ENCODE measurements at regions of chr9 and their contacts with region 1.

Region 1: GRCh38 chr9:12631866-12632265 is 61.3 kb upstream of the TYRP1 start:
- DNase-seq: no peak
- H3K4me3 ChIP-seq: no peak overlapping the region
- H3K27ac ChIP-seq: no peak overlapping the region
- H3K4me1 ChIP-seq: no peaks in the 10 kb centered on the region
- H3K27me3 ChIP-seq: peaks cover 0 to 3% of the 10 kb centered on the region in 2 donors
- CTCF ChIP-seq: no peak

Region 2: DNA sequence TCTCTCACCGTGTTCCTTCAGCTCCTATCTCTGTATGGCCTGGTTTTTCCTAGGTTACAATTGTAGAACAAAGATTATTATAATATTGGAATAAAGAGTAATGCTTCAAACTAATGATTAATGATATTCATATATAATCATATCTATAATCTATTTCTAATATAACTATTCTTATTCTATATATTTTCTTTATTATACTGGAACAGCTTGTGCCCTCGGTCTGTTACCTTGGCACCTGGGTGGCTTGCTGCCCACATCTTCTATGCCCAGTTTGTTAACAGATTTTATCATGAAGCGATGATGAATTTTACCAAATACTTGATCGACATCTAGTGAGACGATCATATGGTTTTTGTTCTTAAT is 302.3 kb before region 1 on chr9:
- intact Hi-C with region 1: loop called (anchors 10 kb)
- DNase-seq: no peak
- H3K4me3 ChIP-seq: no peak overlapping the region
- H3K27ac ChIP-seq: no peak overlapping the region
- H3K4me1 ChIP-seq: no peaks in the 10 kb centered on the region
- H3K27me3 ChIP-seq: no peaks in the 10 kb centered on the region
- CTCF ChIP-seq: no peak